ENCODE measurements at regions of chr5 and their contacts with region 1.

Region 1: DNA sequence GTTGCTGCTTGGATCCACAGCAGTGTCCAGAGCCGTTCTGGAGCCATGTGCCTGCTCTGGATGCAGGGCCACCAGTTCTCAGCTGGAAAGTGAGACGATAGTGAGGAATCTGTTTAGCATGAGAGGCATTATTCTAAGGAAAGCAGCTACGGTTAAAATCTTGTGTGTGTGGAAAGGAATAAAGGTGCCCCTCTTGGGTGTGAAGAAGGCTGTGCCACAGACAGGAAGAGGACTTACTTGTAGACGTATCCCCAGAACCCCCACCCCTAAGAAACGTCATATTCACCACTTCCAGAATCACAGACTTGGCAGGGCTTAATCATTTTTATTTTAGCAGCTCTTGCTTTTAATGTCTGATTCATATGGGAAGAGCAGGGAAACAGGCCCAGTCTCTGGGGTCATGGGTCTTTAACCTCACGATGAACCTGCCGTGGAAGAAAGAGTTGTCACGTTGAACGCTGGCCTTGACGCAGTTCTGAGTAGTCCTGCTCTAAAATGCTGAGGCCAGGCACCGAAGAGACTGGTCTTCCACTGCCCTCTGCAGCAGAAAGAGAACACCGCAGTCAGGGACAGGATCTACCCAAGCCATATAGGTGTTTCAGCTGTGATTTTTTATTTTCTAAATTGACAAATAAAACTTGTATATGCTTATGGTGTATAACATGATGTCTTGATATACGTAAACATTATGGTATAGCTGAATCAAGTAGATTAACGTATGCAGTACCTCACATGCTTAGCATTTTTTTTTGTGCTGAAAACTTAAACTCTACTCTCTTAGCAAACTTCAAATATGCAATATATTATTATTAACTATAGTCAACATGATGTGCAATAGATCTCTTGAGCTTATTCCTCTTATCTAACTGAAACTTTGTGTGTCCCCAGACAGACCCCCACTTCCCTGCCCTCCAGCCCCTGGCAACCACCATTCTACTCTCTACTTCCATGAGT is 38.8 kb downstream of the CARTPT start:
- DNase-seq: peak; percentile 12
- ATAC-seq: peak; percentile 100
- H3K4me3 ChIP-seq: no peak overlapping the region
- H3K27ac ChIP-seq: no peak overlapping the region
- H3K4me1 ChIP-seq: no peaks in the 10 kb centered on the region
- H3K27me3 ChIP-seq: no peaks in the 10 kb centered on the region
- CTCF ChIP-seq: peak; percentile 75 to 90 (median 82)
- EP300 ChIP-seq: no peak
- POLR2A ChIP-seq: no peak
- RAD21 ChIP-seq: peak; percentile 92

Region 2: DNA sequence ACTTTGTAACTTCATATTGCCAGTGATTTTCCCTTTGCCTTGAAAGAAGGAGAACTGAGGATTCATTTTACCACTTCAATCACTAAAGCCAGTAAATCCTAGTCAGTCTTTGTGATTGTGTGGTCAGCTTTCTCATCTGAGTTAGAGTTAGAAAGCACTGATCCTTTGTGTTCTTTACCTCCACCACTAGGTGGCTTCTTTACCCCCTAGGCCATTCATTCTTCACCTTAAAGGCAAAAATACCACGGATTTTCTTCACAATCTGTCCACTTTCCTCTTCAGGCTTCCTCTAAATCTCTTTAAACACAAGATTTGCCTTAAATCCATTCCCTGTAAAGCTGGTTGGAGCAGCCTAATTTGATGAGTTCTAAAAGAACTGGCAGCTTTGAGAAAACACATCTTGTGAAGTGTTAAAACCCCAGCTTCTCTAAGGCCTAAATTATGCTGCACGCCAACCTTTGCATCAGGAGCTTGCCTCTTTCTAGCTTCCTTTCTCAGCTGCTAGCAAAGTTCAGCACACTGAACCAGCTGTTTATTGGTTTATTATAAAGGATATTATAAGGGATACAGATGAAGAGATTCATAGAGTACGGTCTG is 282.0 kb before region 1 on chr5:
- CTCF ChIA-PET with region 1: interaction called, 31 read pairs
- POLR2A ChIA-PET with region 1: no interaction called
- RAD21 ChIA-PET with region 1: interaction called, 11 read pairs
- SMC1A ChIA-PET with region 1: interaction called, 16 read pairs
- in situ Hi-C with region 1: loop called (anchors 5 kb)
- intact Hi-C with region 1: loop called (anchors 1 kb)
- DNase-seq: no peak
- ATAC-seq: peak; percentile 91
- H3K4me3 ChIP-seq: no peak overlapping the region
- H3K27ac ChIP-seq: no peak overlapping the region
- H3K4me1 ChIP-seq: no peaks in the 10 kb centered on the region
- H3K27me3 ChIP-seq: no peaks in the 10 kb centered on the region
- CTCF ChIP-seq: peak; percentile 53 to 72 (median 65)
- EP300 ChIP-seq: no peak
- POLR2A ChIP-seq: no peak
- RAD21 ChIP-seq: peak; percentile 40

Region 3: GRCh38 chr5:71537687-71538086 is 220.2 kb before region 1 on chr5:
- CTCF ChIA-PET with region 1: interaction called, 3 read pairs
- POLR2A ChIA-PET with region 1: no interaction called
- RAD21 ChIA-PET with region 1: no interaction called
- SMC1A ChIA-PET with region 1: no interaction called
- in situ Hi-C with region 1: no loop called
- intact Hi-C with region 1: loop called (anchors 10 kb)
- DNase-seq: no peak
- ATAC-seq: no peak
- H3K4me3 ChIP-seq: no peak overlapping the region
- H3K27ac ChIP-seq: no peak overlapping the region
- H3K4me1 ChIP-seq: peaks cover 3% of the 10 kb centered on the region
- H3K27me3 ChIP-seq: no peaks in the 10 kb centered on the region
- CTCF ChIP-seq: no peak
- EP300 ChIP-seq: no peak
- POLR2A ChIP-seq: no peak
- RAD21 ChIP-seq: no peak

Region 4: GRCh38 chr5:71633255-71634155 is 124.4 kb before region 1 on chr5:
- CTCF ChIA-PET with region 1: no interaction called
- POLR2A ChIA-PET with region 1: no interaction called
- RAD21 ChIA-PET with region 1: no interaction called
- SMC1A ChIA-PET with region 1: no interaction called
- in situ Hi-C with region 1: no loop called
- intact Hi-C with region 1: no loop called
- DNase-seq: no peak
- ATAC-seq: peak; percentile 89
- H3K4me3 ChIP-seq: no peak overlapping the region
- H3K27ac ChIP-seq: no peak overlapping the region
- H3K4me1 ChIP-seq: no peaks in the 10 kb centered on the region
- H3K27me3 ChIP-seq: no peaks in the 10 kb centered on the region
- CTCF ChIP-seq: no peak
- EP300 ChIP-seq: no peak
- POLR2A ChIP-seq: no peak
- RAD21 ChIP-seq: no peak

Region 5: GRCh38 chr5:71658916-71659662 is 98.8 kb before region 1 on chr5:
- CTCF ChIA-PET with region 1: interaction called, 4 read pairs
- POLR2A ChIA-PET with region 1: no interaction called
- RAD21 ChIA-PET with region 1: no interaction called
- SMC1A ChIA-PET with region 1: no interaction called
- in situ Hi-C with region 1: loop called (anchors 25 kb)
- intact Hi-C with region 1: loop called (anchors 1 kb)
- DNase-seq: no peak
- ATAC-seq: no peak
- H3K4me3 ChIP-seq: no peak overlapping the region
- H3K27ac ChIP-seq: no peak overlapping the region
- H3K4me1 ChIP-seq: no peaks in the 10 kb centered on the region
- H3K27me3 ChIP-seq: no peaks in the 10 kb centered on the region
- CTCF ChIP-seq: peak; percentile 12 to 23 (median 20); a peak in 2 of 6 replicates
- EP300 ChIP-seq: no peak
- POLR2A ChIP-seq: no peak
- RAD21 ChIP-seq: 0 out of 2 replicates have a peak, but pooled peaks have one; percentile 6

Region 6: GRCh38 chr5:71734141-71734540 is 23.7 kb before region 1 on chr5:
- CTCF ChIA-PET with region 1: no interaction called
- POLR2A ChIA-PET with region 1: no interaction called
- RAD21 ChIA-PET with region 1: no interaction called
- SMC1A ChIA-PET with region 1: no interaction called
- in situ Hi-C with region 1: no loop called
- intact Hi-C with region 1: no loop called
- DNase-seq: no peak
- ATAC-seq: no peak
- H3K4me3 ChIP-seq: no peak overlapping the region
- H3K27ac ChIP-seq: no peak overlapping the region
- H3K4me1 ChIP-seq: peaks cover 7% of the 10 kb centered on the region; the same call in 1 of the 2 replicates
- H3K27me3 ChIP-seq: no peaks in the 10 kb centered on the region
- CTCF ChIP-seq: no peak
- EP300 ChIP-seq: no peak
- POLR2A ChIP-seq: no peak
- RAD21 ChIP-seq: no peak

Measured in GM12878 (cell line).